ENCODE measurements at regions of chr14 and their contacts with region 1.

Region 1: GRCh38 chr14:106518054-106518943 is 991.9 kb downstream of the TMEM121 start:
- DNase-seq: peak; percentile 68
- H3K4me3 Mint-ChIP-seq: no peak overlapping the region
- H3K27ac Mint-ChIP-seq: no peak overlapping the region
- H3K4me1 Mint-ChIP-seq: peaks cover 15% of the 10 kb centered on the region
- H3K27me3 Mint-ChIP-seq: peaks cover 44% of the 10 kb centered on the region

Region 2: GRCh38 chr14:106436310-106436905 is 81.9 kb before region 1 on chr14:
- intact Hi-C with region 1: loop called (anchors 1 kb)
- DNase-seq: peak; percentile 40
- H3K4me3 Mint-ChIP-seq: no peak overlapping the region
- H3K27ac Mint-ChIP-seq: no peak overlapping the region
- H3K4me1 Mint-ChIP-seq: no peaks in the 10 kb centered on the region
- H3K27me3 Mint-ChIP-seq: peaks cover 37% of the 10 kb centered on the region

Region 3: GRCh38 chr14:106459971-106460730 is 58.1 kb before region 1 on chr14:
- intact Hi-C with region 1: loop called (anchors 1 kb)
- DNase-seq: peak; percentile 45
- H3K4me3 Mint-ChIP-seq: no peak overlapping the region
- H3K27ac Mint-ChIP-seq: no peak overlapping the region
- H3K4me1 Mint-ChIP-seq: peaks cover 5% of the 10 kb centered on the region
- H3K27me3 Mint-ChIP-seq: peaks cover 19% of the 10 kb centered on the region

Measured in activated T-helper 1 cell treated with anti-CD3 and anti-CD28 coated beads, Interleukin-12 subunit alpha, Interleukin-12 subunit beta, Interleukin-2, Interleukin-4 antibody, amounts not matched to agents 30 ng/mL and 10 ng/mL and 1 ng/mL, durations not matched to agents 14 hours and 24 hours and 36 hours (primary cell).